ENCODE measurements at regions of chr7 and their contacts with region 1.

Region 1: GRCh38 chr7:127708788-127709187 is 56.8 kb downstream of the SND1 start:
- DNase-seq: peak; percentile 74
- H3K4me3 Mint-ChIP-seq: no peak overlapping the region
- H3K27ac Mint-ChIP-seq: no peak overlapping the region
- H3K4me1 Mint-ChIP-seq: peaks cover 5% of the 10 kb centered on the region
- H3K27me3 Mint-ChIP-seq: no peaks in the 10 kb centered on the region

Region 2: GRCh38 chr7:127678947-127679346 is 29.8 kb before region 1 on chr7:
- CTCF ChIA-PET with region 1: interaction called, 10 read pairs
- POLR2A ChIA-PET with region 1: no interaction called
- intact Hi-C with region 1: no loop called
- DNase-seq: peak; percentile 18
- H3K4me3 Mint-ChIP-seq: no peak overlapping the region
- H3K27ac Mint-ChIP-seq: peak overlapping the region; percentile 73
- H3K4me1 Mint-ChIP-seq: peaks cover 49% of the 10 kb centered on the region
- H3K27me3 Mint-ChIP-seq: no peaks in the 10 kb centered on the region